ENCODE measurements at regions of chr1 and their contacts with region 1.

Region 1: GRCh38 chr1:247165674-247166073 is 6.1 kb downstream of the ZNF124 start:
- DNase-seq: no peak
- ATAC-seq: no peak
- H3K4me3 ChIP-seq: no peak overlapping the region
- H3K27ac ChIP-seq: no peak overlapping the region
- H3K4me1 ChIP-seq: no peaks in the 10 kb centered on the region
- H3K27me3 ChIP-seq: no peaks in the 10 kb centered on the region
- CTCF ChIP-seq: no peak

Region 2: DNA sequence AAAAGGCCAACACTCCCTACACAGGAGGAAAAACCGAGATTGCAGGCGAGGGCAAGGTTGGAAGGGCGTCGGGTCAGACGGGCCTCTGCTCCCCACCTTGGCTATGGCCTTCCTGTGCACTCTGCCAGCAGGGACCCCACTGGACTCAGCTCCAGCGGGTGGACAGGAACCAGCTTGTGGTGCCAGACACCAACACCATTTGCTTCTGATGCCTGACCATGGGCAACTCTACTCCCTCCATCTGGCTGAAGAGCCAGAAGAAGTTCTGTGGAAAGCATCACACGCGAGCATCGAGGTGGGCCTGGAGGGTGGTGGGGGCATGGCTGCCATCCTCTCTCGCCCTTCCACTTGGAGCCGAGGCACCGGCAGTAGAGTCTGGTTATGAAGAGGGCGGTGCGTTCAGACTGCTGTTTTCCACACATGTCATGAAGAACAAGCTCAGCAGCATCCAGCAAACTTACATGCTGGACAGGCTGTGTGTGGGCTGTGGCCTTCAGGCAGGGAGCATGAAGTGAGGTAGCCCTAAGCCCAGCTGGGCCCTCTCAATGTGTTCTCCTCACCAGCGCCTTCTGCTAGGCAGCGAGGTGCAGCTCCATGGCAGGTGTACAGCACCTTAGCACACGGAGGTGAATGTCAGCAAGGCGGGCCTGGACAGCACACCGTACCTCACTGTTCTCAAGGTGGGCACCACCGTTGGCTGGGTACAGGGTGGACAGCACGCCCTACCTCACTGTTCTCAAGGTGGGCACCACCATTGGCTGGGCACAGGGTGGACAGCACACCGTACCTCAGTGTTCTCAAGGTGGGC is 45.9 kb before region 1 on chr1:
- intact Hi-C with region 1: loop called in 1 of 2 experiments (anchors 5 kb)
- DNase-seq: no peak
- ATAC-seq: no peak
- H3K4me3 ChIP-seq: no peak overlapping the region
- H3K27ac ChIP-seq: no peak overlapping the region
- H3K4me1 ChIP-seq: no peaks in the 10 kb centered on the region
- H3K27me3 ChIP-seq: no peaks in the 10 kb centered on the region
- CTCF ChIP-seq: no peak

Region 3: DNA sequence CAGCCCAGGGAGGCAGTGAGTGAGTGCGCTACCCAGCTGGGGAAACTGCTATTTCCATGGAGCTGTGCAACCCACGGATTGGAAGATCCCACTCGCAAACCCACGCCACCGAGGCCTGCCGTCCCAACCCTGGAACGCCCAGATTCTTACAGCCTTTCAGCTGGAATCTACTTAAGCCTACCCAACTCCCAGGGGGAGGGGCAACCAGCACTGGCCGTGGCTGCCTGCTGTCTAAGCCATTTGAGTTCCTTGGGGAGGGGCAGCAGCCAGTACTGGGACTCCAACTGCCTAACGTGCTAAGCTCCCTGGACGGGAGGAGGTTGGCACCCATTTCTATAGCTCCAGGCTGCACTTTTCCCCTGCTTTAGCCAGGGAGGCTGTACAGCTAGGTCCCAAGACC is 34.4 kb before region 1 on chr1:
- intact Hi-C with region 1: loop called (anchors 5 kb)
- DNase-seq: no peak
- ATAC-seq: no peak
- H3K4me3 ChIP-seq: no peak overlapping the region
- H3K27ac ChIP-seq: no peak overlapping the region
- H3K4me1 ChIP-seq: peaks cover 4% of the 10 kb centered on the region
- H3K27me3 ChIP-seq: no peaks in the 10 kb centered on the region
- CTCF ChIP-seq: no peak

Region 4: GRCh38 chr1:247430434-247430833 is 264.8 kb after region 1 on chr1:
- intact Hi-C with region 1: no loop called
- DNase-seq: no peak
- ATAC-seq: no peak
- H3K4me3 ChIP-seq: no peak overlapping the region
- H3K27ac ChIP-seq: no peak overlapping the region
- H3K4me1 ChIP-seq: no peaks in the 10 kb centered on the region
- H3K27me3 ChIP-seq: peaks cover 0 to 3% (median 0%) of the 10 kb centered on the region in 3 donors
- CTCF ChIP-seq: no peak

Measured in psoas muscle (tissue), 8 donors.